ENCODE measurements at regions of chr5 and their contacts with region 1.

Region 1: GRCh38 chr5:108945094-108945493 is 197.4 kb downstream of the FER start:
- DNase-seq: no peak
- ATAC-seq: no peak
- H3K4me3 ChIP-seq: no peak overlapping the region
- H3K4me3 Mint-ChIP-seq: no peak overlapping the region
- H3K27ac ChIP-seq: no peak overlapping the region
- H3K27ac Mint-ChIP-seq: no peak overlapping the region
- H3K4me1 ChIP-seq: no peaks in the 10 kb centered on the region
- H3K4me1 Mint-ChIP-seq: peaks cover 0 to 2% (median 0%) of the 10 kb centered on the region in 7 donors
- H3K27me3 ChIP-seq: no peaks in the 10 kb centered on the region
- H3K27me3 Mint-ChIP-seq: no peaks in the 10 kb centered on the region

Region 2: DNA sequence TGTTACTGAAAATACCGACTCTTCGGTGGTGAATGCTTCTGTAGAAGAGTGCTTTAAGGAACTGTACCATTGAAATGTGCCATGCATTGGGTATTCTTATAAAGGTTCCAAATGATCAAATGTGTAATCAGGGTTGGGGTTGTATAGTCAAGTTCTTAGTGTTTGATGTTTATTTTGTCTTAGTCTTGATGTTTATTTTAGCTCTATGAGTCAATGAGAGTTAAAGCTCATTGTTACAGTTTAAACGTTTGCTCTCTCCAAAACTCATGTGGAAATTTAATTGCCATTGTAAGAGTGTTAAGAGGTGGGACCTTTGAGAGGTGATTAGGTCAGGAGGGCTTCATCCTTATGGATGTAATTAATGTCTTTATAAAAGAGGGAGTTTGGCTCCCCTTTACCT is 44.4 kb before region 1 on chr5:
- CTCF ChIA-PET with region 1: no interaction called
- POLR2A ChIA-PET with region 1: no interaction called
- intact Hi-C with region 1: loop called in 1 of 2 experiments (anchors 5 kb)
- DNase-seq: no peak
- ATAC-seq: no peak
- H3K4me3 ChIP-seq: no peak overlapping the region
- H3K4me3 Mint-ChIP-seq: no peak overlapping the region
- H3K27ac ChIP-seq: no peak overlapping the region
- H3K27ac Mint-ChIP-seq: no peak overlapping the region
- H3K4me1 ChIP-seq: no peaks in the 10 kb centered on the region
- H3K4me1 Mint-ChIP-seq: peaks cover 0 to 6% (median 0%) of the 10 kb centered on the region in 7 donors
- H3K27me3 ChIP-seq: no peaks in the 10 kb centered on the region
- H3K27me3 Mint-ChIP-seq: no peaks in the 10 kb centered on the region